A549 (cell line): ENCODE measurements at regions of chr10 and their contacts with region 1.

Region 1: DNA sequence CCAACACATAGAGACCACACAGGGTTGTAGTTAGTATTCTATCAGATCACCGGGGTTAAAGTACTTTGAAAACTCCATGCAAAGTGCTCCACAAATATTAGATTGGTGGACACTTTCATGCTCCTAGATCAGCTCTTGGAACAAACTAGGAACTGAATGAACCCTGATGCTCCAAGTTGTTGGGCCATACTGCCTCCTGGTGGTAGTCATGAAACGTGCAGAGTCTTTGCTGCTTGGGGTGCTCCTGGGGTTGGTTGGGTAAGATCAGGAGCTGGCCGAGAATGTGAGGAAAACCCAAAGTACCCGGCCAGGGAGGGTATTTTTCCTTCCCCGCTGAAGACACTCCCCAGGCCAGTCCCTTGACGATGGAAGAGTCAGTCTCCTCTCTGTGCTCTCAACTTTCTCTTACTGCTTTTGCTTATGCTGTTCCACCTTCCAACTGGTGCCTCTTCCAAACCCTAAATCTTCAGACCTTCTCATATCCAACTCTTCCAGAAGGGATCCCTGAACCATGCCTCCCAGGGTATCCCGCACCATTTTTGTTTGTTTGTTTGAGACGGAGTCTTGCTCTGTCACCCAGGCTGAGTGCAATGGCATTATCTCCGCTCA is 920 bp upstream of the RPEL1 start:
- DNase-seq: peak; percentile 90 to 94
- ATAC-seq: peak; percentile 36 to 57; a peak in 4 of 6 replicates
- H3K4me3 ChIP-seq: no peak overlapping the region
- H3K27ac ChIP-seq: peak overlapping the region; percentile 96 to 100
- H3K4me1 ChIP-seq: peaks cover 40% of the 10 kb centered on the region
- CTCF ChIP-seq: peak; percentile 84
- EP300 ChIP-seq: no peak
- POLR2A ChIP-seq: no peak
- RAD21 ChIP-seq: peak; percentile 95 to 98

Region 2: GRCh38 chr10:103069453-103070331 is 175.1 kb before region 1 on chr10:
- CTCF ChIA-PET with region 1: interaction called, 15 read pairs
- POLR2A ChIA-PET with region 1: no interaction called
- DNase-seq: peak; percentile 25 to 73
- ATAC-seq: peak; percentile 70 to 85
- H3K4me3 ChIP-seq: no peak overlapping the region
- H3K27ac ChIP-seq: no peak overlapping the region
- H3K4me1 ChIP-seq: no peaks in the 10 kb centered on the region
- CTCF ChIP-seq: peak; percentile 92
- EP300 ChIP-seq: no peak
- POLR2A ChIP-seq: no peak
- RAD21 ChIP-seq: peak; percentile 94 to 95

Region 3: GRCh38 chr10:103111031-103111917 is 133.5 kb before region 1 on chr10:
- CTCF ChIA-PET with region 1: interaction called, 15 read pairs
- POLR2A ChIA-PET with region 1: no interaction called
- DNase-seq: no peak
- ATAC-seq: peak in 1 of 2 experiments; percentile 64; a peak in 3 of 6 replicates
- H3K4me3 ChIP-seq: no peak overlapping the region
- H3K27ac ChIP-seq: peak overlapping the region in 1 of 2 experiments; percentile 15; a peak in 1 of 6 replicates
- H3K4me1 ChIP-seq: peaks cover 27% of the 10 kb centered on the region
- CTCF ChIP-seq: no peak
- EP300 ChIP-seq: no peak
- POLR2A ChIP-seq: no peak
- RAD21 ChIP-seq: no peak

Region 4: GRCh38 chr10:103168486-103169311 is 76.1 kb before region 1 on chr10:
- CTCF ChIA-PET with region 1: interaction called, 12 read pairs
- POLR2A ChIA-PET with region 1: no interaction called
- DNase-seq: peak in 1 of 2 experiments; percentile 75
- ATAC-seq: peak; percentile 81 to 84
- H3K4me3 ChIP-seq: no peak overlapping the region
- H3K27ac ChIP-seq: peak overlapping the region; percentile 52 to 70; a peak in 4 of 6 replicates
- H3K4me1 ChIP-seq: peaks cover 44% of the 10 kb centered on the region
- CTCF ChIP-seq: no peak
- EP300 ChIP-seq: peak in 1 of 2 experiments; percentile 33; a peak in 1 of 5 replicates
- POLR2A ChIP-seq: no peak
- RAD21 ChIP-seq: no peak

Region 5: GRCh38 chr10:103192451-103193106 is 52.2 kb before region 1 on chr10:
- CTCF ChIA-PET with region 1: interaction called, 40 read pairs
- POLR2A ChIA-PET with region 1: interaction called, 57 read pairs
- DNase-seq: peak; percentile 37 to 80
- ATAC-seq: peak; percentile 66 to 70
- H3K4me3 ChIP-seq: peak overlapping the region; percentile 79
- H3K27ac ChIP-seq: peak overlapping the region; percentile 91 to 97
- H3K4me1 ChIP-seq: peaks cover 60% of the 10 kb centered on the region
- CTCF ChIP-seq: no peak
- EP300 ChIP-seq: peak in 1 of 2 experiments; percentile 15; a peak in 1 of 5 replicates
- POLR2A ChIP-seq: no peak
- RAD21 ChIP-seq: 0 out of 5 replicates have a peak, but pooled peaks of 1 of the 2 experiments have one; percentile 16

Region 6: GRCh38 chr10:103278862-103279298 is 34.1 kb after region 1 on chr10:
- CTCF ChIA-PET with region 1: interaction called, 14 read pairs
- POLR2A ChIA-PET with region 1: interaction called, 22 read pairs
- DNase-seq: peak in 1 of 2 experiments; percentile 60
- ATAC-seq: no peak
- H3K4me3 ChIP-seq: no peak overlapping the region
- H3K27ac ChIP-seq: no peak overlapping the region
- H3K4me1 ChIP-seq: peaks cover 16% of the 10 kb centered on the region
- CTCF ChIP-seq: no peak
- EP300 ChIP-seq: no peak
- POLR2A ChIP-seq: no peak
- RAD21 ChIP-seq: no peak

Region 7: DNA sequence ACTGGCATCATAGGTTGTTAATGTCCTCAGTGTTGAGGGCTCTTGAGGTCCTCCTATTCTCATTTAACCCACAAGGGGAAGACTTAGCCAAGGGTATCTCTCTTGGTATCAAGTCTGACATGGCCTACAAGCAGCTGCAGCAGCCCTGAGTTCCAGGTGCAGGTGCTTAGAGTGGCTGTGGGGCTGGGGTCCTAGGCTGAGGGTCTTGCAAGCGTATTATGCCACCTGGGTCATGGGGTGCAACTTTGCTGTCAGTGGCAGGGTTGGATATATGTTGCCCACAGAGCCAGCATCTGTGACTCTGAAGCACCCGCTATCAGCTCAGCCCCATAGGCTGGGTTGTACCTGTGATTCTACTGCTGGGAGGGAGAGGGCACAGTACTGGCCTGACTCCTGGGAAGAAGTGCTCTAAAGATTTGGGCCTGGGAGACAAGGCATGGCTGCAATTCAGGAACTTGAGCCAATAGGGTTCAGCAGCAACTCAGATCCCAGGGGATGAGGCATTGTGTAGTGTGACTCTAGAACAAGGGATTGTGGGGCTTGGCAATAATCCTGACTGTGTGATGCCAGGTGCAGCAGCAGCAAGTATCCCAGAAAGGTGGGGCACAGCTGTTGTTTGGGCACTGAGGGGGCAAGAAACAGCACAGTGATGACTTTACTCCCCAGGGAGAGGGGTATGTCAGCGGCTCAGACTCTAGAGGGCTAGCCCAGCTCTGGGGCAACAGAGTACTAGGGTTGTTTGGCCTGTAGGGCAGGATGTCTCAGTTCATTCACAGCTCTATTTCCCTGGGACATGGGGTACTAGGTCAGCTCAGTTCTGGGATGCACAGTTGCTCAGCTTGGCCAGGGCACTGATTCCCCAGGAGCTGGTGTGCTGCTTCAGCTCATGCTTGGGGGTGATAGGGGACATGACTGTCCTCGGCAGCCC is 290.1 kb after region 1 on chr10:
- CTCF ChIA-PET with region 1: no interaction called
- POLR2A ChIA-PET with region 1: no interaction called
- DNase-seq: no peak
- ATAC-seq: no peak; a peak in 1 of 6 replicates
- H3K4me3 ChIP-seq: no peak overlapping the region
- H3K27ac ChIP-seq: no peak overlapping the region
- H3K4me1 ChIP-seq: no peaks in the 10 kb centered on the region
- CTCF ChIP-seq: no peak
- EP300 ChIP-seq: no peak
- POLR2A ChIP-seq: no peak
- RAD21 ChIP-seq: no peak